SK-N-SH (cell line): ENCODE measurements at regions of chr18 and their contacts with region 1.

Region 1: DNA sequence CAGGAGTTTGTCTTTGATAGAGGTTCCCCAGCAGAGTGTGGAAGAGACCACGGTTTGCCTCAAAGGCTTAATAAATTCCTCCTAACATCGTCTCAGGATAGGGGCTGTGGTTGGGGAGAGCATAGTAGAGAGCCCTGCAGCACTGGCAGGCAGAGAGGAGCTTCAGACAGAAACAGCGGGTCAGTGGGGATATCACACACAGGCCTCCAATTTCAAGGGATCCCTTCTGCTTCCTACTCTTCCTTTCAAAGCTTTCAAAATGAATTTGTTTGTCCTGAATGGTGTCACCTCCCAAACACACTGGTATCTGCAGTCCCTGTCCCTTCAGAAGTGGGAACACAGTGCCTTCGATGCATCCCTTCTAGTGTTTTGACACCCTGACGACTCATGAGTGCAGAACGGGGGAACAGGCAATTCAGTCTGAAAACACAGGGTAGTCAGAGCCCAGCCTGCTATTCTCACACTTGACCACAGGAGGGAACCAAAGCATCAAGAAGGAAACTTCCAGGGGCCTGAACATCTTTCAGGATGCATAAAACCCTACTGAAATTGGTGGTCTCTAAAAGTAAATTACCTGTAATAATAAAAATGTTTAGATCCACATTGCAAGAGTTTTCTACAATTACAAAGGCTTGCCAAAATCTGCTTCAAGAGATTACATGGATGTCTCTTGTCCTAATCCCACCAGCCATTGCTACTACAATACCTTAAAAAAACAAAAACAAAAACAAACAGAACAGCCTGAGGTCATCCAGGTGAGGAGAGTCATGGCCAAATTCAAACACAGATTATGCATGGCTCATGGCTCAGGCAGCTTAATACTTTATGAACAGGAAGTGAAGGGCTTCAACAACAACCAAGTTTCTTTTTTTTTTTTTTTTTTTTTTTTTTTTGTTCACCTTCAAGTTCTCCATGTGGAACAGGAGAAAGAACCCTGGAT is 49.8 kb downstream of the SLC14A2 start:
- DNase-seq: peak; percentile 71
- H3K4me3 ChIP-seq: peak overlapping the region in 1 of 2 experiments; percentile 9; a peak in 1 of 4 replicates
- H3K27ac ChIP-seq: no peak overlapping the region
- H3K4me1 ChIP-seq: peaks cover 3 to 7% of the 10 kb centered on the region in 2 experiments; a peak in 3 of 4 replicates
- H3K27me3 ChIP-seq: no peaks in the 10 kb centered on the region
- CTCF ChIP-seq: peak; percentile 96
- EP300 ChIP-seq: no peak
- RAD21 ChIP-seq: peak; percentile 94

Region 2: DNA sequence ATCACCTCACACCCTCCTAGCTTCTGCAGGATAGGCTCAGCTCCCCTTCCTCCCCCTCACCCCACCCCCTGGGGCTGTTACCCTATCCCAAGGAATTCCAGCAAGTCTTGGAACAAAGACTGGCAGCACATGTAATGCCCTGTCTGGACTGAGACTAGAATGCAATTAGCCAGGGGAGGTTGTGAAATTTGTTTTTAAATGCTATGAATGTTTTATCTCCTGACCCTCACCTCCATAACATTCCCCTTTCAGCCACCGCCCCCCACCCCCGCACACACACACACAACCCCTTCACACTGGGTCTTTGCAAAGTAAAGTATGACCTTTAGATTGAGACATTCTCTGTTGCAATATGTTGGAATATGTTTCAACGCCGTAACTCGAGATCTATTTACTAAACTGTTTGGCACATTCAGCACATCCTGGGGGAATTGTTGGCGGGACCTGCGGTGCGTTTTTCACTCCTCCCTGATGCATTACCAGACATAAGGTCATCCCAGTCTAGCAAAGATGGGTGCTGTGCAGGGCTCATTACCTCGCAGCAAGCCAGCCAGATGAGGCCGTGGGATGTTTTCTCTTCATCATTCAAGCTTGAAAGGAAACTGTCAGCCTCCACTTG is 340.5 kb before region 1 on chr18:
- CTCF ChIA-PET with region 1: no interaction called
- POLR2A ChIA-PET with region 1: no interaction called
- DNase-seq: no peak
- H3K4me3 ChIP-seq: no peak overlapping the region
- H3K27ac ChIP-seq: no peak overlapping the region
- H3K4me1 ChIP-seq: no peaks in the 10 kb centered on the region
- H3K27me3 ChIP-seq: no peaks in the 10 kb centered on the region
- CTCF ChIP-seq: no peak
- EP300 ChIP-seq: no peak
- RAD21 ChIP-seq: no peak

Region 3: GRCh38 chr18:45540125-45540524 is 125.0 kb before region 1 on chr18:
- CTCF ChIA-PET with region 1: no interaction called
- POLR2A ChIA-PET with region 1: no interaction called
- DNase-seq: no peak
- H3K4me3 ChIP-seq: no peak overlapping the region
- H3K27ac ChIP-seq: no peak overlapping the region
- H3K4me1 ChIP-seq: no peaks in the 10 kb centered on the region; a peak in 1 of 4 replicates
- H3K27me3 ChIP-seq: no peaks in the 10 kb centered on the region
- CTCF ChIP-seq: no peak
- EP300 ChIP-seq: no peak
- RAD21 ChIP-seq: no peak

Region 4: GRCh38 chr18:45580127-45580526 is 85.0 kb before region 1 on chr18:
- CTCF ChIA-PET with region 1: no interaction called
- POLR2A ChIA-PET with region 1: no interaction called
- DNase-seq: no peak
- H3K4me3 ChIP-seq: no peak overlapping the region
- H3K27ac ChIP-seq: no peak overlapping the region
- H3K4me1 ChIP-seq: no peaks in the 10 kb centered on the region
- H3K27me3 ChIP-seq: no peaks in the 10 kb centered on the region
- CTCF ChIP-seq: no peak
- EP300 ChIP-seq: no peak
- RAD21 ChIP-seq: no peak

Region 5: GRCh38 chr18:45652303-45653080 is 12.6 kb before region 1 on chr18:
- CTCF ChIA-PET with region 1: interaction called, 26 read pairs
- POLR2A ChIA-PET with region 1: no interaction called
- DNase-seq: no peak
- H3K4me3 ChIP-seq: no peak overlapping the region
- H3K27ac ChIP-seq: no peak overlapping the region
- H3K4me1 ChIP-seq: peaks cover 0 to 9% of the 10 kb centered on the region in 2 experiments; a peak in 1 of 4 replicates
- H3K27me3 ChIP-seq: no peaks in the 10 kb centered on the region
- CTCF ChIP-seq: no peak
- EP300 ChIP-seq: no peak
- RAD21 ChIP-seq: no peak

Region 6: DNA sequence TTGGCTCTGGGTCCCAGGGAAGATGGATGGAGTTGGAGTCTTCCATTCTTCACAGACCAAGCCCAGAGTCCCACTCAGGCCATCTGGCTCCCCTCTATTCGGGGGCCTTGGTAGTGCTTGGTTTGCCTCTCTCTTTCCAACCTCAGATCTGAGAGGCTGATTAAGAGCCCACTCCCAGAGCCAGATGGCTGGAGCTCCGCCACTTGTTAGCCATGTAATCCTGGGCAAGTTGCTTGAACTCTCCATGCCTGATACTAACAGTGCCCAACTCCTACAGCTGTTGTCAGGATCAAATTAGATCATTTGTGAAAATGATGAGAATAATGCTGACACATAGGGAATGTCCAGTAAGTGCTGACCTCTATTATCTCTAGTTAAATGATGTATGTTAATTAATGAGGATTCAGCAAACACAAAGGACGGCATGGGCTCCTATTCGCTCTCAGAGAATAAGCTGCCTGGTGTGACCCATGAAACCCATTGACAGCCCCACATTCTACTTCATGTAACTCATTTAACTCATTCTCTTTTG is 12.2 kb after region 1 on chr18:
- CTCF ChIA-PET with region 1: interaction called, 12 read pairs
- POLR2A ChIA-PET with region 1: no interaction called
- DNase-seq: peak; percentile 21
- H3K4me3 ChIP-seq: no peak overlapping the region
- H3K27ac ChIP-seq: no peak overlapping the region
- H3K4me1 ChIP-seq: no peaks in the 10 kb centered on the region; a peak in 2 of 4 replicates
- H3K27me3 ChIP-seq: no peaks in the 10 kb centered on the region
- CTCF ChIP-seq: no peak
- EP300 ChIP-seq: no peak
- RAD21 ChIP-seq: no peak

Region 7: GRCh38 chr18:45690975-45691815 is 26.1 kb after region 1 on chr18:
- CTCF ChIA-PET with region 1: interaction called, 28 read pairs
- POLR2A ChIA-PET with region 1: no interaction called
- DNase-seq: peak; percentile 69
- H3K4me3 ChIP-seq: no peak overlapping the region; a peak in 1 of 4 replicates
- H3K27ac ChIP-seq: no peak overlapping the region
- H3K4me1 ChIP-seq: no peaks in the 10 kb centered on the region; a peak in 1 of 4 replicates
- H3K27me3 ChIP-seq: no peaks in the 10 kb centered on the region
- CTCF ChIP-seq: peak; percentile 90
- EP300 ChIP-seq: no peak
- RAD21 ChIP-seq: peak; percentile 96

Region 8: DNA sequence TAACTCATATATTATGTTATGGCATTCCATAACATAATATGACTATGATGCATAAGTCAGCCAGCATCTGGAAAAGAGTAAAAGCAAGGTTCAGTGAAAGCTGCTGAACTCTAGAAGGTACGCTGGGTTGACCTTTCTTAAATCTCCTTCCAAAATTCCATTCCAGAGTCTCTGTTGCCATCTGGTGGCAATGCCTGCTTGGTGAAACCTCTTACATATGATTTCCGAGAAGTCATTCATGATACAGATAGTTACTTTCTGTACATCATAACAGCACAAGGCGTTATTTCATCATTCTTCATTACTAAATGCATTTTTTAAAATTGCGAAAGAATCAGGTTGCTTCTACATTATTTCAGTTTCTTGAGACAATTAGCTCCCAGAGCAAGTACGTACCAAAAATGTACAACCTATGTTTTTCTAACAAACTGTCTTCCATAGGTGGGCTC is 309.0 kb after region 1 on chr18:
- CTCF ChIA-PET with region 1: interaction called, 37 read pairs
- POLR2A ChIA-PET with region 1: no interaction called
- DNase-seq: peak; percentile 57
- H3K4me3 ChIP-seq: peak overlapping the region in 1 of 2 experiments; percentile 14; a peak in 2 of 4 replicates
- H3K27ac ChIP-seq: peak overlapping the region in 1 of 2 experiments; percentile 22; a peak in 1 of 4 replicates
- H3K4me1 ChIP-seq: no peaks in the 10 kb centered on the region
- H3K27me3 ChIP-seq: no peaks in the 10 kb centered on the region
- CTCF ChIP-seq: peak; percentile 91
- EP300 ChIP-seq: no peak
- RAD21 ChIP-seq: peak; percentile 94

Region 9: DNA sequence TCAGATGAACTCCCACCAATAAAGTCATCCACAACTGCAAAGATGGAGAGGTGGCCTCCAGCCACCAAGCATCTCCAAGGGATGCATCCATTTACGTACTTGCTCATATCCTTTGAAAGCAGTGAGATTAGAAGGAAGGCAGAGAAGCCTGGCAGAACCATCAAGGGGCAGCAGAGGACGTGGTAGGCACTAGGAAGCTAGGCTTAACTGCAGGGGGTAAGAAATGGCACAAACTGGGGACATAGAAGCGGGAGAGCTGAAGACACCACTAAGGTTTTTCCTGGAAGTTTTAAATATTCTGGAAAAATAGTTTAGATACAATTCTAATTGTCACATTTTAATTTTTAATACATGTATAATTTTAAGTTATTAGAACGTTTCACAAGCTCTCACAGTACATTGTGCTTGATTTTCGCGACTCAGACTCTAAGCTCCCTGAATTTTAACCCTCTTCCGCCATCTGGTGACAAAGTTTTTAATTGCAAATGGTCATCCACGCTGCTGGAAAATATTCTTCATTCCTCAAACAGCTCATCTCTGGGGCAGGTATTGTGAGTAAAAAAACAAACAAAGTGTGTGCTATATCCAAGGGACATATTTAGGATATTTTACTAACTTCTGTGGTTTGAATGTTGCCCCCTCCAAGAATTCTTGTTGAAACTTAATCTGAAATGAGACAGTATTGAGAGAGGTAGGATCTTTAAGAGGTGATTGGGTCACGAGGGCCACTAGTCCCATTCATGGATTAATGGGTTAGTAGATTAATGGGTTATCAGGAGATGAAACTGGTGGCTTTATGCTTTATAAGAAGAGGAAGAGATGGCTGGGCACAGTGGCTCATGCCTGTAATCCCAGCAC is 408.6 kb after region 1 on chr18:
- CTCF ChIA-PET with region 1: interaction called, 30 read pairs
- POLR2A ChIA-PET with region 1: interaction called, 3 read pairs
- DNase-seq: peak; percentile 57
- H3K4me3 ChIP-seq: no peak overlapping the region
- H3K27ac ChIP-seq: no peak overlapping the region
- H3K4me1 ChIP-seq: peaks cover 0 to 9% of the 10 kb centered on the region in 2 experiments; a peak in 1 of 4 replicates
- H3K27me3 ChIP-seq: no peaks in the 10 kb centered on the region
- CTCF ChIP-seq: peak; percentile 73
- EP300 ChIP-seq: no peak
- RAD21 ChIP-seq: peak; percentile 88